ENCODE measurements at regions of chrX and their contacts with region 1.

Region 1: DNA sequence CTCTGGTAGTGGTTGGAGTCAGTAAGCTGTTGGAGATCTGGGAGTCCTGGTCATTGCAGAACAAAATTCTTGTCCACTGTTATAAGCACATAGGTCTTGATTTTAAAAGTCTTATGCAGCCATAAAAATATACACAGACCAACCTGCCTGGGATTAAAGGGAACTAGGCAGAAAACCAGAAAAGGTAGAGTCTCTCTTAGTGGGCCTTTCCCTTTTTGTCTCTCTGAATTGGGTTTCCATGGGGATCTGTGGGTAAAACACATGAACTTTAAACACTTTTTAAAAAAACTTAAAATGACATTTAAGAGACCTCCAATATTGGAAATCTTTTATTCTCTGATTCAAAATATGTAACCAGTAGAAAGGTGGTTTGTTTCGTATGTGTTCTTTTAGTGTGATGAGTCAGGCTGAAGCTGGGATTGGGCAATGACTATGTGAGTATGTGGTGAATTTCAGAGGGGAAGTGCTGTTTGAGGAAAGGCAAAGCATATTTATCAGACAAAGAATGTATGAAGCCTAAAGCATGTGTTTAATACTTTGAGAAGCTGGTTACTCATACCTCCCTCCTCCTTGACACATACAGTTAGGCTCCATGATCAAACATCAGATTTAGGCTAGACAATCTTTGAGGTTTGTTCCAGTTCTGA is 29.6 kb downstream of the SLC16A2 start:
- DNase-seq: peak; percentile 87
- H3K4me3 Mint-ChIP-seq: no peak overlapping the region
- H3K27ac Mint-ChIP-seq: peak overlapping the region; percentile 64
- H3K4me1 Mint-ChIP-seq: peaks cover 18% of the 10 kb centered on the region
- H3K27me3 Mint-ChIP-seq: peaks cover 30% of the 10 kb centered on the region
- CTCF ChIP-seq: no peak

Region 2: GRCh38 chrX:74291964-74292807 is 158.7 kb before region 1 on chrX:
- CTCF ChIA-PET with region 1: no interaction called
- POLR2A ChIA-PET with region 1: no interaction called
- intact Hi-C with region 1: loop called (anchors 10 kb)
- DNase-seq: peak; percentile 87
- H3K4me3 Mint-ChIP-seq: peak overlapping the region; percentile 79
- H3K27ac Mint-ChIP-seq: peak overlapping the region; percentile 63
- H3K4me1 Mint-ChIP-seq: no peaks in the 10 kb centered on the region
- H3K27me3 Mint-ChIP-seq: no peaks in the 10 kb centered on the region
- CTCF ChIP-seq: no peak